B cell (primary cell): ENCODE measurements at regions of chr7 and their contacts with region 1.

Region 1: GRCh38 chr7:101251871-101252659 is 7.2 kb upstream of the FIS1 start:
- DNase-seq: peak; percentile 99
- ATAC-seq: peak; percentile 100
- H3K4me3 ChIP-seq: peak overlapping the region; percentile 81 to 98 (median 89)
- H3K4me3 Mint-ChIP-seq: peak overlapping the region; percentile 99
- H3K27ac ChIP-seq: peak overlapping the region; percentile 60 to 87
- H3K27ac Mint-ChIP-seq: peak overlapping the region; percentile 95
- H3K4me1 ChIP-seq: peaks cover 15 to 23% of the 10 kb centered on the region in 2 donors
- H3K4me1 Mint-ChIP-seq: peaks cover 29% of the 10 kb centered on the region
- H3K27me3 ChIP-seq: peaks cover 0 to 4% (median 0%) of the 10 kb centered on the region in 4 experiments
- H3K27me3 Mint-ChIP-seq: peaks cover 8% of the 10 kb centered on the region
- CTCF ChIP-seq: no peak

Region 2: DNA sequence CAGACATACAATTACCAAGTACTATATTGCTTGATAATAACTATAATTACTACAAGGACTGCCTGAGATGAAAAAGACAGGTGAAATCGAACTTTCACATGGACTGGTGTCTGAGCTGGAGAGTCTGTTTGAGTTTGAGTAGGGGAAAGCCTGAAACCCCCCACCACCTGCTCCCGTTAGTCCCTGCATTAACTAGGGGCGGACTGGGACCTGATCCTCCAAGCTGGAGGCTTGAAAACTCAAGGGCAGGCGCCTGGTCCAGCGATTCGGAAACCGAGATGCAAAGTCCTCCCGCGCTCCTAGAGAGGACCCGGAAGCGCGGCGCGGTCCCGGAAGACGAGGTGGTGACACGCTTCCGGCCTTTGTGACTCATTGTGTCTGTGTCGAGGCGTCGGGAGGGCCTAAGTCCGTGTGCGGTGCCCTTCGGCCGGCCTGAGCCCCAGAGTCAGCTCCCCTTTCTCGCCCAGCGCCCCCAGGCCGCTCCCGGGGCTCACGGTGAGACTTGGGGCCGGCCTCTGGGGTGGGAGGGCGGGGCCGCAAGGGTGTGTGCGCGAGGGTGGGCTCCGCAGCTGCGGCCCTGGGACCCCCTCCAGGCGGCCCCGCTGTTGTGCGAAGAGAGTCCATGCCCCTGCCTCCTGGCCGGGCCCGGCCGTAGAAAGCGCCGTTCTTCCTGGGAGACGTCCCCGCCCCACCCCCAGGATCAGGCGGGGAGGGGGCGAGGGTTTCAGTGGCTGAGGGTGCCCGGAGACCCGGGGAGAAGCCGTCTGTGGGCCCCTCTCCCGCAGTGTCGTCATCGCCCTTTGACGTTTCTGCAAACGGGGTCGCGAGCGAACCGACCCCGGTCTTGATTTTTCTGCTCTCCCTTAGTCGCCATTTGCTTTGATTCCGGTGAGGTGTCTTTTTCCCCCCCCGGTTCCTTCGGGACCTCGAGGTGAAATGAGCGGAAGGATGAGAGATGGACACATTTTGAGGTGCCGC is 1236.5 kb before region 1 on chr7 and contains the start of gene ZKSCAN1:
- CTCF ChIA-PET with region 1: no interaction called
- POLR2A ChIA-PET with region 1: no interaction called
- intact Hi-C with region 1: loop called (anchors 5 kb)
- DNase-seq: peak; percentile 91
- ATAC-seq: peak; percentile 95
- H3K4me3 ChIP-seq: peak within 1 kb of the TSS; percentile 75 to 89 (median 85)
- H3K4me3 Mint-ChIP-seq: peak within 1 kb of the TSS; percentile 93
- H3K27ac ChIP-seq: peak within 1 kb of the TSS; percentile 80 to 87
- H3K27ac Mint-ChIP-seq: peak within 1 kb of the TSS; percentile 94
- H3K4me1 ChIP-seq: peaks cover 15 to 19% of the 10 kb centered on the region in 2 donors
- H3K4me1 Mint-ChIP-seq: peaks cover 38% of the 10 kb centered on the region
- H3K27me3 ChIP-seq: no peaks in the 10 kb centered on the region
- H3K27me3 Mint-ChIP-seq: peaks cover 6% of the 10 kb centered on the region
- CTCF ChIP-seq: no peak
- total RNA-seq, gene ZKSCAN1: 89.3 and 97.4 TPM in 2 replicates

Region 3: GRCh38 chr7:101031082-101031481 is 221.0 kb before region 1 on chr7:
- CTCF ChIA-PET with region 1: no interaction called
- POLR2A ChIA-PET with region 1: interaction called, 11 read pairs
- intact Hi-C with region 1: no loop called
- DNase-seq: no peak
- ATAC-seq: no peak
- H3K4me3 ChIP-seq: no peak overlapping the region
- H3K4me3 Mint-ChIP-seq: no peak overlapping the region
- H3K27ac ChIP-seq: no peak overlapping the region
- H3K27ac Mint-ChIP-seq: no peak overlapping the region
- H3K4me1 ChIP-seq: no peaks in the 10 kb centered on the region
- H3K4me1 Mint-ChIP-seq: no peaks in the 10 kb centered on the region
- H3K27me3 ChIP-seq: peaks cover 0 to 6% (median 0%) of the 10 kb centered on the region in 4 experiments
- H3K27me3 Mint-ChIP-seq: peaks cover 9% of the 10 kb centered on the region
- CTCF ChIP-seq: no peak

Region 4: DNA sequence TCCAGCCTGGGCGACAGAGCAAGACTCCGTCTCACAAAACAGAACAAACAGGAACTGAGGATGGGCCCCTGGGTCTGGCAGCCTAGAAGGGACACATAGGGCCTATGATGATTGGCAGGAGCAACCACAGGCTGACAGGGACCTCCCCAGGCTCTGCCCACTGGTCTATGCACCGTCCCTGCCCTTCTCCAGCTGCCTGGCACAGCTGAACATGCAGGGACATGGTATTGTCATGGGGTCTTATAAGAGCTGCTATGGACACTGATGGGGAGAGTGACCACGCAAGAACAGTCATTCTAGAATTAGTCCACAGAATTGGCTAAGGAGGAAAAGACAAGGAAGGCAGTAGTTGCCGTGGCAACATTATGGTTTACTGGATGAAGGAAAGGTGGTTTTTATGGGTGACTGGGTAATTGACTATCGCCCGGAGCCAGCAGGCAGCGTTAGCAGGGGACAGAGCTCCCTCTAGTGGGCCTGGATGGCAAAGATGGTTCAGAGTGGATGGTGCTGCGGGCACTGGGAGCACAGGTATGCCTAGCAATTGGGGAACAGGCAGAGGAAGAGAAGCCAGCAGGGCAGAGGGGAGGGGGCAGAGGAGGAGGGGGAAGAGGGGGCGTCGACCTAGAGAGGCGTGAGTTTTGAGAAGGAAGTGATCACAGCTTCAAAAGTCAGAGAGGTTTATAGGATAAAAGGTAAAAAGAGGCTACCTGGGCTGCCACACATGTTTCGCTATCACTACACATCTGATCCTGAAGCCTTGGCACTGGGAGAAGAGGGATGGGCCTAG is 174.6 kb before region 1 on chr7:
- CTCF ChIA-PET with region 1: no interaction called
- POLR2A ChIA-PET with region 1: no interaction called
- intact Hi-C with region 1: no loop called
- DNase-seq: peak; percentile 88
- ATAC-seq: peak; percentile 91
- H3K4me3 ChIP-seq: no peak overlapping the region
- H3K4me3 Mint-ChIP-seq: peak overlapping the region; percentile 4
- H3K27ac ChIP-seq: peak overlapping the region; percentile 24 to 63
- H3K27ac Mint-ChIP-seq: peak overlapping the region; percentile 18
- H3K4me1 ChIP-seq: peaks cover 7 to 10% of the 10 kb centered on the region in 2 donors
- H3K4me1 Mint-ChIP-seq: peaks cover 9% of the 10 kb centered on the region
- H3K27me3 ChIP-seq: no peaks in the 10 kb centered on the region
- H3K27me3 Mint-ChIP-seq: peaks cover 14% of the 10 kb centered on the region
- CTCF ChIP-seq: peak; percentile 81

Region 5: DNA sequence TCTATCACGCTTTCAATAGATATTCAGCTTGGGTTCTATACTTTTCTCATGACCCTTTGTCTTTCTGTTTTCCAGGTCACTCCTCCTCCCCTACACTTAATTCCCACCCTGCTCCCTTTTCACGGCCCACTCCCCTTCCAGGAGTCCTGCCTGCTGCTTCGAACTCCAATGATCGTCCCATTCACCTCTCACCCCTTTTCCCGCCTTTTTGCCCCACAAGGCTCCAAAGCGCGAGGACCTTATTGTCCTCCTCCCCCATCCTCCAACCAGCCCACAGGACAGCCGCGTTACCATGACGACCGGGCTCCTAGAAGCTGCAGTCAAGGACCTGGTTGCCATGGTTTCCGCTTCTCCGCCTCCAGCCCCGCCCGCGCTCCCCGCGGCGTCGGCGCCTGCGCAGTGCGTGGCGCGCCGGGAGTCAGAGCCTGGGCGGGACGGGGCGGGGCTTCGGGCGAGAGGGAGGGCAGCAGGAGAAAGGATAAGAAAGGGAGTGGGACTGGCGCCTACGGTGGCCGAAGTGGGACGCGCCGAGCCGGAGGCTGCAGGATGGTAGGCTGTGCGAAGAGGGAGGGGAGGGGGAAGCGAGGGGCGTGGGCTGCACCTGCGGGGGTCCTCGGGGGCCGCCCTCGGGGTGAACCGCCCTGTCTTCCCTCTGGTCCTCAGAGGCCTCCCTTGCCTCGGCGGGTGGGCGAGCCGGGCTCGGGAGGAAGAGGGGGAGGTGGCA is 97.9 kb before region 1 on chr7 and contains the start of gene AP1S1:
- CTCF ChIA-PET with region 1: interaction called, 4 read pairs
- POLR2A ChIA-PET with region 1: no interaction called
- intact Hi-C with region 1: loop called (anchors 1 kb)
- DNase-seq: peak; percentile 95
- ATAC-seq: peak; percentile 90
- H3K4me3 ChIP-seq: peak within 1 kb of the TSS in 4 of 5 experiments; percentile 53 to 71 (median 63)
- H3K4me3 Mint-ChIP-seq: peak within 1 kb of the TSS; percentile 86
- H3K27ac ChIP-seq: no peak within 1 kb of the TSS
- H3K27ac Mint-ChIP-seq: peak within 1 kb of the TSS; percentile 67
- H3K4me1 ChIP-seq: peaks cover 10 to 16% of the 10 kb centered on the region in 2 donors
- H3K4me1 Mint-ChIP-seq: peaks cover 12% of the 10 kb centered on the region
- H3K27me3 ChIP-seq: no peaks in the 10 kb centered on the region
- H3K27me3 Mint-ChIP-seq: peaks cover 9% of the 10 kb centered on the region
- CTCF ChIP-seq: no peak
- total RNA-seq, gene AP1S1: 10.3 and 11.4 TPM in 2 replicates

Region 6: DNA sequence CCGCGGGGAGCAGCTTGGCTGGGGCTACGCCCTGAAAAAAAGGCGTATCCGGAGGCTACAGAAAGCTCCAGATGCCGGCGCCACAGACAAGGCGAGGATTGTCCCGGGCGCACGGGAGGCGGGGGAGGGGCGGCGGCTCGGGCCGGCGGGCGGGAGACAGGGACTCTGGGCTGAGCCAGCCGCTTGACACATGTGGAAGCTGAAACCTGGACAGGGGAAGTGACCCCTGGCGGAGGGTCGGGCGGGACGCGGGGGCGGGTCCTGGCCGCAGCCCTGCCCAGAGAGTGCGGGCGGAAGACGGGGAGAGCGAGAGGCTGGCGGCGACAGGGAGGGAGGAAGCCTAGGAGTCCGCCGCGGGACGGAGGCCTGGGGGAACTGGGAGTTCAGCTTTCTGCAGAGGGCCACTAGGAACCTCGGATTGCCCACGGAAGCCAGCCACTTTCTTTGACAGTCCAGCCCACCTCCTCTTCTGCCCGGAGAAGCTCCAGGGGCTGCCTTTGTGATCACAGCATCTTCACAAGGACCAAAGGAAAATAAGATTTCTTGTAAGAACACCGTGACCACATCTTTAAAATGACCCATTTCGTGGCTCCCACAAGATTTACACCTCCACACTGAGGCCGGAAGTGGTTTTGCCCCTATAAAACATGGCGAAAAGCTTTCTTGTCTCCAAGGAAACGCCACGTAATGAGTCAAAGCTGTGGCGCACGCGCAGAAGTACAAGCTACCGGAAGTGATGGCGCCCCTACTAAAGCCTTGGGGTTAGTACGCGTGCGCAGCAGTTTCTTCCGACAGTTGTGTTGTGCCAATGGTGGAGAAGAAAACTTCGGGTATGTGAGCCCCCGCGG is 34.5 kb before region 1 on chr7 and contains the starts of genes PLOD3 and ZNHIT1:
- CTCF ChIA-PET with region 1: interaction called, 6 read pairs
- POLR2A ChIA-PET with region 1: interaction called, 4 read pairs
- intact Hi-C with region 1: loop called (anchors 1 kb)
- DNase-seq: peak; percentile 98
- ATAC-seq: peak; percentile 80
- H3K4me3 ChIP-seq: peak within 1 kb of the TSS; percentile 85 to 99 (median 94)
- H3K4me3 Mint-ChIP-seq: peak within 1 kb of the TSS; percentile 97
- H3K27ac ChIP-seq: peak within 1 kb of the TSS; percentile 44 to 75
- H3K27ac Mint-ChIP-seq: peak within 1 kb of the TSS; percentile 95
- H3K4me1 ChIP-seq: peaks cover 18 to 21% of the 10 kb centered on the region in 2 donors
- H3K4me1 Mint-ChIP-seq: peaks cover 25% of the 10 kb centered on the region
- H3K27me3 ChIP-seq: no peaks in the 10 kb centered on the region
- H3K27me3 Mint-ChIP-seq: no peaks in the 10 kb centered on the region
- CTCF ChIP-seq: peak; percentile 6
- total RNA-seq, gene PLOD3: 47.5 and 47.9 TPM in 2 replicates
- total RNA-seq, gene ZNHIT1: 37.3 and 38.4 TPM in 2 replicates

Region 7: DNA sequence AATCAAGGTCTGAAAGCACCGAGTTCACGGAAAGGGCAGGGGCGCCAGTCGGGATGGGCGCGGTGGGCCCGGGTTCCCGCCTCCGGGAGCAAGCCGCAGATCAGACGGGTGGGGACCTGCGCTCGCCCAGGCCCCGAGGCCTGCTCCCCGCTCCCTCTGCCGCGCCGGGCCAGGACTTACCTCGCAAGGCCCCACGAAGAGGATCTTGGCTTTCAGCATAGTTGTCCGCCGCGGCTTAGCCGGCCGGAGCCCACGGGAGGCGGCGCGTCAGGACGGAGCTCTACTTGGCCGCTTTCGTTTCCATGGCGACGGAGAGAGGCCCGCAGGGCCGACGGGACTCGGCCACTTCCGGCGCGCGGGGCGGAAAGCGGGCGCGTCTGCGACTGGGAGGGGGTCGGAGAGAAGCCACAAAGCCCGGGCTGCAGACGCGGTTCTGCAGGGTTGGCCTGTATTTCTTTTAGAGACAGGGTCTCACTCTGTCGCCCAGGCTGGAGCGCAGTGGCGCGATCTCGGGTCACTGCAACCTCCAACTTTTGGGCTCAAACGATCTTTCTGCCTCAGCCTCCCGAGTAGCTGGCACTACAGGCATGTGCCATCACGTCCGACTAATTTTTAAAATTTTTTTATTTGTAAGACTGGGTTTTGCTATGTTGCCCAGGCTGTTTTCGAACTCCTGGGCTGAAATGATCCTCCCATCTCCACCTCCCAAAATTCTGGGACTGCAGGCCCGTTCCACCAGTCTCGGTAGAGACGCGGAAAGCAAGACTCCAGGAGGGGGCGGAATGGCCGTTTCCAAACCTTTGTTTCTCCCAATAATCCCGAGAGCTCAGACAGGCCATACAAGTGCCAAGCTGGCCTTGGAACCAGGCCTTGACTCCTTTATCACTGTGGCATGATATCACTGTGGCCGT is 69.7 kb after region 1 on chr7 and contains the start of gene IFT22:
- CTCF ChIA-PET with region 1: no interaction called
- POLR2A ChIA-PET with region 1: no interaction called
- intact Hi-C with region 1: loop called (anchors 2 kb)
- DNase-seq: peak; percentile 93
- ATAC-seq: peak; percentile 97
- H3K4me3 ChIP-seq: peak within 1 kb of the TSS; percentile 68 to 91 (median 82)
- H3K4me3 Mint-ChIP-seq: peak within 1 kb of the TSS; percentile 95
- H3K27ac ChIP-seq: peak within 1 kb of the TSS; percentile 22 to 89
- H3K27ac Mint-ChIP-seq: peak within 1 kb of the TSS; percentile 93
- H3K4me1 ChIP-seq: peaks cover 13 to 16% of the 10 kb centered on the region in 2 donors
- H3K4me1 Mint-ChIP-seq: peaks cover 16% of the 10 kb centered on the region
- H3K27me3 ChIP-seq: no peaks in the 10 kb centered on the region
- H3K27me3 Mint-ChIP-seq: no peaks in the 10 kb centered on the region
- CTCF ChIP-seq: no peak
- total RNA-seq, gene IFT22: 7.3 and 10.3 TPM in 2 replicates